Endothelial cell of umbilical vein (primary cell): ENCODE measurements at regions of chr12 and their contacts with region 1.

Region 1: GRCh38 chr12:21129906-21130305 is 1.1 kb upstream of the SLCO1B1 start:
- DNase-seq: no peak
- H3K4me3 ChIP-seq: no peak overlapping the region
- H3K27ac ChIP-seq: no peak overlapping the region
- H3K4me1 ChIP-seq: no peaks in the 10 kb centered on the region
- H3K27me3 ChIP-seq: no peaks in the 10 kb centered on the region
- CTCF ChIP-seq: no peak
- POLR2A ChIP-seq: no peak

Region 2: GRCh38 chr12:21073822-21074460 is 56.0 kb before region 1 on chr12:
- CTCF ChIA-PET with region 1: no interaction called
- POLR2A ChIA-PET with region 1: no interaction called
- dilution Hi-C with region 1: no loop called
- intact Hi-C with region 1: no loop called
- DNase-seq: no peak
- H3K4me3 ChIP-seq: no peak overlapping the region
- H3K27ac ChIP-seq: no peak overlapping the region
- H3K4me1 ChIP-seq: no peaks in the 10 kb centered on the region
- H3K27me3 ChIP-seq: no peaks in the 10 kb centered on the region
- CTCF ChIP-seq: no peak
- POLR2A ChIP-seq: no peak

Region 3: GRCh38 chr12:21144309-21144708 is 14.4 kb after region 1 on chr12:
- CTCF ChIA-PET with region 1: no interaction called
- POLR2A ChIA-PET with region 1: no interaction called
- dilution Hi-C with region 1: no loop called
- intact Hi-C with region 1: loop called (anchors 2 kb)
- DNase-seq: no peak
- H3K4me3 ChIP-seq: no peak overlapping the region
- H3K27ac ChIP-seq: no peak overlapping the region
- H3K4me1 ChIP-seq: no peaks in the 10 kb centered on the region
- H3K27me3 ChIP-seq: no peaks in the 10 kb centered on the region
- CTCF ChIP-seq: no peak
- POLR2A ChIP-seq: no peak